Calu3 (cell line): ENCODE measurements at regions of chr21 and their contacts with region 1.

Region 1: DNA sequence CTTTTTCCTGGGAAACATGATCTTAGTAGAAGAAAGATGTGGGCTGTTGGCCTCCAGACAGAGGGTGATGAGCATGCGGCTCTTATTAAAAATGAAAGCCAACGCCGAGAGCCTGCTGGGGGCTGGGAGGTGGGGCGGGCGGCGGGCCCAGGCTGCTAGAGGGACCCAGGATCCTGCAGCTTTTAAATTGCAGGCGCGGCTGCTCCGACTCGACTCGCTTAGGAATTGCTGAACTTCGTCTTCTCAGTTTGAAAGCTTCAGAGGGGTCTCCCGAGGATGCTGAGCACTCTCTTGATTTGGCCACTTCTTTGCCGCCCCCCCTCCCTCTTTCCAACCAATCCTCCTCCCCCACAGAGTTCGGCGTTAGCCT is 1.2 kb downstream of the AGPAT3 start:
- DNase-seq: no peak
- H3K4me3 Mint-ChIP-seq: peak overlapping the region; percentile 71
- H3K27ac Mint-ChIP-seq: peak overlapping the region; percentile 85
- H3K4me1 Mint-ChIP-seq: peaks cover 27% of the 10 kb centered on the region
- H3K27me3 Mint-ChIP-seq: no peaks in the 10 kb centered on the region
- CTCF ChIP-seq: no peak

Region 2: GRCh38 chr21:43624339-43624738 is 241.9 kb before region 1 on chr21:
- CTCF ChIA-PET with region 1: no interaction called
- intact Hi-C with region 1: no loop called
- DNase-seq: no peak
- H3K4me3 Mint-ChIP-seq: no peak overlapping the region
- H3K27ac Mint-ChIP-seq: no peak overlapping the region
- H3K4me1 Mint-ChIP-seq: no peaks in the 10 kb centered on the region
- H3K27me3 Mint-ChIP-seq: no peaks in the 10 kb centered on the region
- CTCF ChIP-seq: no peak

Region 3: GRCh38 chr21:43938751-43939442 is 72.7 kb after region 1 on chr21:
- CTCF ChIA-PET with region 1: no interaction called
- intact Hi-C with region 1: loop called (anchors 2 kb)
- DNase-seq: peak; percentile 82
- H3K4me3 Mint-ChIP-seq: peak overlapping the region; percentile 64
- H3K27ac Mint-ChIP-seq: no peak overlapping the region
- H3K4me1 Mint-ChIP-seq: no peaks in the 10 kb centered on the region
- H3K27me3 Mint-ChIP-seq: no peaks in the 10 kb centered on the region
- CTCF ChIP-seq: peak; percentile 85